ENCODE measurements at regions of chr12 and their contacts with region 1.

Region 1: GRCh38 chr12:46896680-46897079 is 70.9 kb upstream of the SLC38A4 start:
- DNase-seq: no peak
- H3K4me3 ChIP-seq: no peak overlapping the region
- H3K27ac ChIP-seq: no peak overlapping the region
- H3K4me1 ChIP-seq: no peaks in the 10 kb centered on the region
- H3K27me3 ChIP-seq: no peaks in the 10 kb centered on the region
- CTCF ChIP-seq: no peak
- EP300 ChIP-seq: no peak
- POLR2A ChIP-seq: no peak

Region 2: DNA sequence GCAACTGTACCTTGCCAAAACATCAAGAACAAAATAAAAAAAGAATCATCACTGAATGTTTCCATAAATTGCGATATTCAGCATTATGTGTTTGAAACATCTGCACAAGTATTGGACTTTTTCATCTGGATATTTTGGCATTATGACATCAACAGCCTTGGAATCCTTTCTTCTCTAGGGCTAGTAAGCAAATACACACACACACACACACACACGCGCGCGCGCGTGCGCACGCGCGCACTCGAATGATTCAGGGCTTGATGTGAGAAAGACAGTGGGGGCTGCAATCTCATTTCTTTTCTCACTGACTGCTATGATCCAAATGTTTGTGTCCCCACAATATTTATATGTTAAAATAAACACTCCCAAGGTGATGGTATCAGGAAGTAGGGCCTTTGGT is 19.2 kb after region 1 on chr12:
- intact Hi-C with region 1: loop called (anchors 1 kb)
- DNase-seq: no peak
- H3K4me3 ChIP-seq: no peak overlapping the region
- H3K27ac ChIP-seq: no peak overlapping the region
- H3K4me1 ChIP-seq: peaks cover 0 to 12% (median 6%) of the 10 kb centered on the region in 4 donors
- H3K27me3 ChIP-seq: no peaks in the 10 kb centered on the region
- CTCF ChIP-seq: no peak
- EP300 ChIP-seq: no peak
- POLR2A ChIP-seq: no peak